WTC11 (cell line): ENCODE measurements at regions of chr19 and their contacts with region 1.

Region 1: GRCh38 chr19:37906869-37907734 is at the start of gene SIPA1L3:
- DNase-seq: peak; percentile 97
- ATAC-seq: peak; percentile 92
- H3K4me3 Mint-ChIP-seq: peak within 1 kb of the TSS; percentile 90
- H3K27ac Mint-ChIP-seq: peak within 1 kb of the TSS; percentile 98
- H3K4me1 Mint-ChIP-seq: peaks cover 38% of the 10 kb centered on the region
- H3K27me3 Mint-ChIP-seq: no peaks in the 10 kb centered on the region; the same call in 1 of the 2 replicates
- CTCF ChIP-seq: no peak
- total RNA-seq, gene SIPA1L3: 41.5 to 44.4 TPM (median 42.4 TPM) in 3 replicates

Region 2: DNA sequence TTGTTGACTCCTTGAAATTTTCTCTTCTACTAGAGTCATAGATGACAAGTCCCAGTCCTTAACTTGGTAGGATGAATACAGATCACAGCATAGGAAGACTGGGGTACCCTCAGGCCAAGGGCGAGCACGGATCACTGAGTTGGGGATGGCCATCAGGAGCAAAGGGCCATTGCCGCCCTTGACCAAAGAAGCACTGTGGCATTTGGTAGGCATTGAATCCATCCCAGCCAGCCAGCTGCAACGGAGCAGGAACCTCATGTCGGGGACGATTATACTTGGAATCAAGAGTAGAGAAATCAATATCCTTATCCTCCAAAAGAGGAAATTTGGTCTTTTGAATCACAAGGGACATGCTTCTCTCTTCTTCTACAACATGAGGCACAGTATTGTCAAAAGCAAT is 77.6 kb before region 1 on chr19:
- CTCF ChIA-PET with region 1: no interaction called
- POLR2A ChIA-PET with region 1: no interaction called
- DNase-seq: no peak
- ATAC-seq: no peak
- H3K4me3 Mint-ChIP-seq: no peak overlapping the region
- H3K27ac Mint-ChIP-seq: no peak overlapping the region
- H3K4me1 Mint-ChIP-seq: no peaks in the 10 kb centered on the region
- H3K27me3 Mint-ChIP-seq: peaks cover 80% of the 10 kb centered on the region
- CTCF ChIP-seq: no peak

Region 3: DNA sequence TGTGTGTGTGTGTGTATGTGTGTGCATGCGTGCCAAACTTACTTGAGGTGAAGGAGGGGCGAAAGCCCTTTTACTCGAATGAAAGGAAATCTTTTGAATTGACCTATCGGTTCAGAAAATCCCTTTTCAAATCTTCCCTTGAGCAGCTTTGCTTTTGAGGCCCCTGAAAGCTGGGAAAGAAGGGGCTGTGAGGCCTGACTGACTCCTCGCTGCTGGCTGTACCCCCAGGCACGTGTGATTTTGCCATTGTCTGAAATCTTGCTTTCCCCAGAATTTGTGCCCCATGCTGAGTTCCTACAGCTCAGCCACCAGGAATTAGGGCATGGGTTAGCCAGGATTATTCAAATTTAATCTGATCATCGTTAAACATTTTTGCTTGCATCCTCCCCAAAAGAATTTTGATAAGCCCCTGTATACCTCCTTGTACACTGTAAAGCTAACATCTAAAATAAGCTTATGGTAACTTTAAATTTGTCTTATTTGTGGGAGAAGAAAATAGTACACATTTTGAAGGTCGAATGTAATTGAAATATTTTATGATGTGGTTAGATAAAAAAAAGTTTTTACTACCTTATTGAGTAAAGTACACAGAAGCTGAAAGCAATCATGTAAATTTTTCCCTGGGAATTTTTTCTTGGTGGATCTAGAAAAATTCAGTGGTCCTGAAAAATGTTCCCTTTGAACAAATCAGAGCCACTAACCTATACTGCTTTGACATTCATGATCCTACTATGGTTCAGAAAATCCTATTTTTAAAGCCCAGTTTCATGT is 46.6 kb after region 1 on chr19:
- CTCF ChIA-PET with region 1: interaction called, 11 read pairs
- POLR2A ChIA-PET with region 1: interaction called, 3 read pairs
- DNase-seq: no peak
- ATAC-seq: peak; percentile 35
- H3K4me3 Mint-ChIP-seq: no peak overlapping the region
- H3K27ac Mint-ChIP-seq: peak overlapping the region; percentile 89
- H3K4me1 Mint-ChIP-seq: peaks cover 40% of the 10 kb centered on the region
- H3K27me3 Mint-ChIP-seq: no peaks in the 10 kb centered on the region
- CTCF ChIP-seq: no peak

Region 4: DNA sequence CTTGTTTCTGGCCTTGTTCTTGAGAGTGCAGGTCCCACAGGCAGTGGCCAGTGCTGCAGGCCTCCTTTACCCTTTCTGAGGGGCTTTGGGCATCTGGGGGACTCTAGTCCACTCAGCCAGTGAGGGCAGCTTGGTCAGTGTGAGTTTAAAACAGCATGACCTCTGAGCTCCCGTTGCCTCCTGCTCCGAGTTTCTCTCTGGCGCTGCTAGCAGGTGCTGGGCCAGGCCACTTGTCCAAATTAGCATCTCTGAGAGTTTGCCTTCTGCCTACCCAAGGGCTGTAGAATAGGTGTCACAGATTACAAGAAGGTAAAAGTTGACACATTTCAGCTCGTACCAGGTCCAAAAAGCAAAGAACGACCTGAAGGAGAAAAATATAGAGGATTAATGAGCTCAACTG is 105.8 kb after region 1 on chr19:
- CTCF ChIA-PET with region 1: interaction called, 14 read pairs
- POLR2A ChIA-PET with region 1: no interaction called
- DNase-seq: peak; percentile 31
- ATAC-seq: peak; percentile 71
- H3K4me3 Mint-ChIP-seq: no peak overlapping the region; the same call in 1 of the 2 replicates
- H3K27ac Mint-ChIP-seq: peak overlapping the region; percentile 99
- H3K4me1 Mint-ChIP-seq: peaks cover 29% of the 10 kb centered on the region
- H3K27me3 Mint-ChIP-seq: no peaks in the 10 kb centered on the region
- CTCF ChIP-seq: no peak

Region 5: DNA sequence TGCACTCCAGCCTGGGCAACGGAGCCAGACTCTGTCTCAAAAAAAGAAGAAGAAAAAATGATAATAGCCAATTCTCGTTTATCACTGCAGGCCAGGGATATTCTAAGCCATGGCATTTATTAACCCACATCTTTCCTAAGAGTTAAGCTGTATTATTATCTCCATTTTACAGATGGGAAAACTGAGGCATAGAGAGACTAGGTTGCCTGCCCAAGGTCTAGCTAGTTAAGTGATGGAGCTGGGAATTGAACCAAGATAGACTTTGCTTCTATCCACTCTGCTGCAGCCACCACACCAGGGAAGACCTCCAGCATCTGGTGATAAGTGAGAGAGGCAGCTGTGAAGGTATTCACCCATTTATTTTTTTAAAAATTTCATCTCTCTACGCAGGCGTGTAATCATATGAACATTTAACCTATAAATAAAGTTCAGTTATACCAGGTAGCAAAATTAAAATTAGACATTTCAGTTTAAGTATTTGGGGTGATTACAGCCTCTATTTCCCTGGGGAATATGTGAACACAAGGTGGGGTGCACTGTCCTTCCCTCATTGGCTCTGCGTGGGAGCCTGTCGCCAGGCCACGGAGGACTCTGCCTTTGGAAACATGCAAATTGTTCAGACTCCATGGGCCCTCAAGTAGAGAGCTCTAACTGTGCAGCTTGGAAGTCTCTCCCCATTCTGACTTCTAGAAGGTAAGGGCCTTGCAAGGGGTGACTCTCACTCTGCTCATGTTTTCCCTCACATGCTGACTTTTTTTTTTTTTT is 157.7 kb after region 1 on chr19:
- CTCF ChIA-PET with region 1: interaction called, 13 read pairs
- POLR2A ChIA-PET with region 1: interaction called, 6 read pairs
- DNase-seq: no peak
- ATAC-seq: no peak
- H3K4me3 Mint-ChIP-seq: no peak overlapping the region
- H3K27ac Mint-ChIP-seq: no peak overlapping the region
- H3K4me1 Mint-ChIP-seq: peaks cover 6% of the 10 kb centered on the region
- H3K27me3 Mint-ChIP-seq: no peaks in the 10 kb centered on the region
- CTCF ChIP-seq: no peak

Region 6: DNA sequence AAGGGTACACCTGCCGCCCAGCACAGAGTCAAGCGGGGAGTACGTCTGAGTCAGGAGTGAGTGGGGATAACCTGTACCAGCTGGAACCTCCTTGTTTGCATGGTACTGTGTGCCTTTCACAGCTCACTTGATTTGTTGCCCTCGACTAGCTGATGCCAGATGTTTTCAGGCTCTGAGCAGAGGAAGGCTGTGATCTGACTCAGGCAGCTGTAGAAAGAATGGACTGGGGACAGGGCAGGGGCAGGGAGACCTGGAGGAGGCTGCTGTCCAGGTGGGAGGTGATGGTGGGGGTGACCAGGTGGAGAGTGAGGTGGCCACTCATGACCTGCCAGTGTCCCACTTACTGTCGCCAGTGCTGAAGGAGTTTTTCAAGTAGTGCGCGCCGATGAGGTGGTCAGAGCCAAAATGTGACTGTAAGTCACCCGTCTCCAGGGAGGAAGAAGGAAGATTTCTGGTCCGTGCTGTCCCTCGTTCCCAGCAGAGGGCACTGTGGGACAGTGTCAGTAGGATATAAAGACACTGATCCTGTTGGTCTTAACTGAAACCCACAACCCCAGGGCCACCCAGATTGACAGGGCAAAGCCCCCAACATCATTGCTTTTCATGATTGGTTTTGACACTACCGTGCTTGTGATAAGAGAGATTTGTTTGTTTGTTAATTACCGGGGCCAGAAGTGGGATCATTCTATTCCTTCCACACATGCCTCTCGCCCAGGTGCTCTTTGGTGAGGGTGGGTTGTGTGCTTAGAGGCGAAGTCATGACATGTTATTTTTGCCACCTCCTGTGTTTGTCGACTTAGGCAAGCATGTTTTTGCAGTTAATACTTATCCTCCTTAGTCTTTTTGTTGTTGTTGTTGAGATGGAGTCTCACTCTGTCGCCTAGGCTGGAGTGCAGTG is 188.6 kb after region 1 on chr19:
- CTCF ChIA-PET with region 1: interaction called, 20 read pairs
- POLR2A ChIA-PET with region 1: interaction called, 6 read pairs
- DNase-seq: peak; percentile 89
- ATAC-seq: peak; percentile 94
- H3K4me3 Mint-ChIP-seq: no peak overlapping the region
- H3K27ac Mint-ChIP-seq: peak overlapping the region; percentile 35
- H3K4me1 Mint-ChIP-seq: no peaks in the 10 kb centered on the region
- H3K27me3 Mint-ChIP-seq: no peaks in the 10 kb centered on the region
- CTCF ChIP-seq: peak; percentile 46; the same call in 1 of the 2 replicates

Region 7: DNA sequence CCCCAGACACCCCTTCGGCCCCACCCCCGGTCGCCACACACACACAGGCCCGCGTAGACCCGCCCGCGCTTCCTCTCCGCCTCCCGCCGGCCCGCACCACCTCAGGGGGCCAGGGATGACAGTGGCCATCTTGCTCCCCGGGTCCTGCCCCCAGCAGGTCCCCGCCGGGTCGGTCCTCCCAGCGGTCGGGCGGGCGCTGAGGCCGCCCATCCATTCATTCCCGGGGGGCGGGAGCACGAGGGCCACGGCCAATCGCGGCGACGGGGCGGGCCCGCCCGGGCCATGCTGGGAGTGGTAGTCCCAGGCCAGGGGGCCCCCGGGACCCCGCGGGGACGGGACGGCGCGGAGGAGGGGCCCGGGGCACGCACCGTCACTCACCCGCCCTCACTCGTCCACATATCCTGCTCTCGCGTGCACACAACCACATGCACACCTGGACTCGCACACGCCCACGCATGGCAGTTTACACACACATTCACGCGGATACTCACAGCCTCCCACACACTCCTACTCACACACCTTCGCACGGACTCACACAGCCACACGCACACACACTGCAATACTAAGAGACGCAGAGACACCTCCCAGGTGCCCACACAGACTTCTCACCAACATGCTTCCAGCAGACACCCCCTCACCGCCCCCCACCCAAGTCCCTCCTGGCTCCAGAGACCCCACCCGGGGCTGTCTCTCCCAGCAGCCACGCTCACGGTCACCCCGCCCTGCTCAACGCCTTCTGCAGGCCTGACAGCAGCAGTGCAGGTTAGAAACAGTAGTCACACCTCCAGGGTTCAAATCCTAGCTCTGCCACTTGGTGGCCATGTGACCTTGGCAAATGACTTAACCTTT is 317.1 kb after region 1 on chr19 and contains the start of gene DPF1:
- CTCF ChIA-PET with region 1: interaction called, 11 read pairs
- POLR2A ChIA-PET with region 1: no interaction called
- DNase-seq: peak; percentile 92
- ATAC-seq: peak; percentile 83
- H3K4me3 Mint-ChIP-seq: peak within 1 kb of the TSS; percentile 80
- H3K27ac Mint-ChIP-seq: peak within 1 kb of the TSS; percentile 50
- H3K4me1 Mint-ChIP-seq: peaks cover 25% of the 10 kb centered on the region
- H3K27me3 Mint-ChIP-seq: peaks cover 15% of the 10 kb centered on the region
- CTCF ChIP-seq: no peak
- total RNA-seq, gene DPF1: 5.2 to 6.8 TPM (median 5.9 TPM) in 3 replicates